SK-N-SH (cell line): ENCODE measurements at regions of chr11 and their contacts with region 1.

Region 1: GRCh38 chr11:62841361-62842184 is 2.2 kb upstream of the WDR74 start:
- DNase-seq: peak; percentile 87
- H3K4me3 ChIP-seq: peak overlapping the region; percentile 59 to 81
- H3K27ac ChIP-seq: peak overlapping the region; percentile 94 to 95
- H3K4me1 ChIP-seq: peaks cover 13 to 15% of the 10 kb centered on the region in 2 experiments; a peak in 2 of 4 replicates
- H3K27me3 ChIP-seq: no peaks in the 10 kb centered on the region
- CTCF ChIP-seq: no peak
- EP300 ChIP-seq: peak; percentile 72 to 76; a peak in 3 of 4 replicates
- RAD21 ChIP-seq: no peak

Region 2: DNA sequence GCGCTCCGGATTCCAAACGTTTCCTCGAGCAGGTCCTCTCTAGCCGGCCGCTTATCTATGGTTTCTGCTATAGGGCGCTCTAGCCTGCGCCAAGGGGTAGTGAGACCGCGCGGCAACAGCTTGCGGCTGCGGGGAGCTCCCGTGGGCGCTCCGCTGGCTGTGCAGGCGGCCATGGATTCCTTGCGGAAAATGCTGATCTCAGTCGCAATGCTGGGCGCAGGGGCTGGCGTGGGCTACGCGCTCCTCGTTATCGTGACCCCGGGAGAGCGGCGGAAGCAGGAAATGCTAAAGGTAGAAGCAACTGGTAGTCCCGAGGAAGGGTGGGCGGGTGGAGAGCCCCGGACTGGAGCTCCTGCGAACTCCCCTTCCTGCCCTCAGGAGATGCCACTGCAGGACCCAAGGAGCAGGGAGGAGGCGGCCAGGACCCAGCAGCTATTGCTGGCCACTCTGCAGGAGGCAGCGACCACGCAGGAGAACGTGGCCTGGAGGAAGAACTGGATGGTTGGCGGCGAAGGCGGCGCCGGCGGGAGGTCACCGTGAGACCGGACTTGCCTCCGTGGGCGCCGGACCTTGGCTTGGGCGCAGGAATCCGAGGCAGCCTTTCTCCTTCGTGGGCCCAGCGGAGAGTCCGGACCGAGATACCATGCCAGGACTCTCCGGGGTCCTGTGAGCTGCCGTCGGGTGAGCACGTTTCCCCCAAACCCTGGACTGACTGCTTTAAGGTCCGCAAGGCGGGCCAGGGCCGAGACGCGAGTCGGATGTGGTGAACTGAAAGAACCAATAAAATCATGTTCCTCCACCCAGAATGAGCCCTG is 169.8 kb before region 1 on chr11 and contains the starts of genes LBHD1 and UQCC3:
- CTCF ChIA-PET with region 1: no interaction called
- POLR2A ChIA-PET with region 1: interaction called, 11 read pairs
- DNase-seq: peak; percentile 88
- H3K4me3 ChIP-seq: peak within 1 kb of the TSS; percentile 68 to 90
- H3K27ac ChIP-seq: peak within 1 kb of the TSS; percentile 80 to 94
- H3K4me1 ChIP-seq: peaks cover 21 to 22% of the 10 kb centered on the region in 2 experiments; a peak in 3 of 4 replicates
- H3K27me3 ChIP-seq: no peaks in the 10 kb centered on the region
- CTCF ChIP-seq: no peak
- EP300 ChIP-seq: no peak
- RAD21 ChIP-seq: no peak
- polyA plus RNA-seq, gene LBHD1: 9.7 and 12.0 TPM in 2 replicates
- polyA plus RNA-seq, gene UQCC3: 22.7 and 24.8 TPM in 2 replicates

Region 3: GRCh38 chr11:62726915-62727763 is 114.4 kb before region 1 on chr11 and contains the start of gene HNRNPUL2:
- CTCF ChIA-PET with region 1: no interaction called
- POLR2A ChIA-PET with region 1: interaction called, 10 read pairs
- DNase-seq: peak; percentile 95
- H3K4me3 ChIP-seq: peak within 1 kb of the TSS; percentile 89 to 92
- H3K27ac ChIP-seq: peak within 1 kb of the TSS; percentile 99
- H3K4me1 ChIP-seq: peaks cover 12 to 21% of the 10 kb centered on the region in 2 experiments; a peak in 3 of 4 replicates
- H3K27me3 ChIP-seq: no peaks in the 10 kb centered on the region
- CTCF ChIP-seq: no peak; the same call in 1 of the 2 replicates
- EP300 ChIP-seq: no peak
- RAD21 ChIP-seq: no peak
- polyA plus RNA-seq, gene HNRNPUL2: 31.0 and 33.5 TPM in 2 replicates

Region 4: GRCh38 chr11:62771144-62772021 is 70.2 kb before region 1 on chr11 and contains the start of gene TAF6L:
- CTCF ChIA-PET with region 1: interaction called, 3 read pairs
- POLR2A ChIA-PET with region 1: interaction called, 15 read pairs
- DNase-seq: peak; percentile 98
- H3K4me3 ChIP-seq: peak within 1 kb of the TSS; percentile 56 to 74
- H3K27ac ChIP-seq: peak within 1 kb of the TSS; percentile 85 to 88
- H3K4me1 ChIP-seq: peaks cover 0 to 15% of the 10 kb centered on the region in 2 experiments; a peak in 1 of 4 replicates
- H3K27me3 ChIP-seq: no peaks in the 10 kb centered on the region
- CTCF ChIP-seq: no peak
- EP300 ChIP-seq: no peak
- RAD21 ChIP-seq: no peak
- polyA plus RNA-seq, gene TAF6L: 33.6 and 34.4 TPM in 2 replicates

Region 5: GRCh38 chr11:62805076-62805892 is 36.3 kb before region 1 on chr11 and contains the start of gene NXF1:
- CTCF ChIA-PET with region 1: no interaction called
- POLR2A ChIA-PET with region 1: interaction called, 27 read pairs
- DNase-seq: peak; percentile 99
- H3K4me3 ChIP-seq: peak within 1 kb of the TSS; percentile 91 to 94
- H3K27ac ChIP-seq: peak within 1 kb of the TSS; percentile 75 to 83
- H3K4me1 ChIP-seq: peaks cover 8 to 18% of the 10 kb centered on the region in 2 experiments
- H3K27me3 ChIP-seq: no peaks in the 10 kb centered on the region
- CTCF ChIP-seq: 0 out of 2 replicates have a peak, but pooled peaks have one; percentile 14
- EP300 ChIP-seq: no peak
- RAD21 ChIP-seq: no peak
- polyA plus RNA-seq, gene NXF1: 47.6 and 59.7 TPM in 2 replicates

Region 6: DNA sequence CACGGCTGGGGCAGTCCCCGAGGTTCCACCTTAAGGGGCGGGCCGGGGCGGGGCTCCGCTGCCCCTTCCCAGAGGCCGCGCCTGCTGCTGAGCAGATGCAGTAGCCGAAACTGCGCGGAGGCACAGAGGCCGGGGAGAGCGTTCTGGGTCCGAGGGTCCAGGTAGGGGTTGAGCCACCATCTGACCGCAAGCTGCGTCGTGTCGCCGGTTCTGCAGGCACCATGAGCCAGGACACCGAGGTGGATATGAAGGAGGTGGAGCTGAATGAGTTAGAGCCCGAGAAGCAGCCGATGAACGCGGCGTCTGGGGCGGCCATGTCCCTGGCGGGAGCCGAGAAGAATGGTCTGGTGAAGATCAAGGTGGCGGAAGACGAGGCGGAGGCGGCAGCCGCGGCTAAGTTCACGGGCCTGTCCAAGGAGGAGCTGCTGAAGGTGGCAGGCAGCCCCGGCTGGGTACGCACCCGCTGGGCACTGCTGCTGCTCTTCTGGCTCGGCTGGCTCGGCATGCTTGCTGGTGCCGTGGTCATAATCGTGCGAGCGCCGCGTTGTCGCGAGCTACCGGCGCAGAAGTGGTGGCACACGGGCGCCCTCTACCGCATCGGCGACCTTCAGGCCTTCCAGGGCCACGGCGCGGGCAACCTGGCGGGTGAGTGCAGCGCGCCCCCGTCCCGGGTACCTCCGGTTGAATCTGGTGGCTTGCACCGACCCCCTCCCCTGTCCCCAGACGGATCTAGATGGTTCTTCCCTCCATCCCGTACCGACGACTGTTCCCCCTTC is 39.4 kb after region 1 on chr11 and contains the start of gene SLC3A2:
- CTCF ChIA-PET with region 1: interaction called, 4 read pairs
- POLR2A ChIA-PET with region 1: interaction called, 34 read pairs
- DNase-seq: peak; percentile 89
- H3K4me3 ChIP-seq: peak within 1 kb of the TSS; percentile 82 to 91
- H3K27ac ChIP-seq: peak within 1 kb of the TSS; percentile 94 to 98
- H3K4me1 ChIP-seq: peaks cover 32 to 44% of the 10 kb centered on the region in 2 experiments
- H3K27me3 ChIP-seq: no peaks in the 10 kb centered on the region
- CTCF ChIP-seq: peak; percentile 67
- EP300 ChIP-seq: no peak
- RAD21 ChIP-seq: peak; percentile 57
- polyA plus RNA-seq, gene SLC3A2: 212 and 308 TPM in 2 replicates